Mucosa of descending colon (tissue), 3 donors: ENCODE measurements at regions of chr10 and their contacts with region 1.

Region 1: DNA sequence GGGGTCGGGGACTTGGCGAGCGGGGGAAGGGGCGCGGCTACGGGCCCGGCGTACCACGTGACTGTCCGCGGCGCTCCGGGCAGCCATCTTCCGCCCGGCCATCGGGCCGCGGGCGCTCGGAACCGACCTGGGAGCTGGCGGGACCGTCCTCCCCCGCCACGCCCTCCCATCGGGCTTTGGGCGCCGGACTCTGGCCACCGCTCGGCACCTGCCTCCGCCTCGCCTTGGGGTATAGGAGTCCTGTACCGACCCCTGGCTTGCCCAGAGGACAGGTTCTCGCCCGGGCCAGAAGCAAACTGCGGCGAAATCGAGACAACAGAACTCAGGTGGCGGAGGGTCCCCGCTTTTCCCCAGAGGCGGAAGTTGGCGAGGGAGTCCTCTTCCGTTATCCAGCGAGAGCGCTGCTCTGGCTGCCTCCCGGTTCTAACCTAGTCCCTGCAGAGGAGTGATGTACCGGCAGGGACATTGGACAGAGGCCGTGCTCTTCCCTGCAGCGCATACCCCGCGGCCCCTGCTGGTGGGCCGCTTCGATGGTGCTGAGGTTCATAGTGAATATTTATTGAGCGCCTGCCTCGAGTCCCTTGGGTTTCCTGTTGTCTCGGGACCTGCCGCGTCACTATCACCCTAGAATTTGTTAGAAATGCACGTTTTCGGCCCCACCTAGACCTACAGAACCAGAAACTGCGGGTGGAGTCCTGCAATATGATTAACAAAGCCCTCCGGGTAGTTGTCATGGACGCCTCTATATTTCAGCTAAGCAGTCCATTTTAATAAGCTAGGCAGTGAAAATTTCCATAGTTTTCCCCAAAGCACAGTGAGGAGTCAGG is 1.3 kb upstream of the SGMS1 start:
- DNase-seq: peak in 2 of 3 donors; percentile 82 to 90
- ATAC-seq: peak; percentile 69
- H3K4me3 ChIP-seq: peak overlapping the region; percentile 92
- H3K4me1 ChIP-seq: peaks cover 10% of the 10 kb centered on the region
- CTCF ChIP-seq: peak; percentile 27

Region 2: GRCh38 chr10:50375051-50375452 is 250.0 kb before region 1 on chr10:
- intact Hi-C with region 1: no loop called
- DNase-seq: no peak
- ATAC-seq: no peak
- H3K4me3 ChIP-seq: no peak overlapping the region
- H3K4me1 ChIP-seq: no peaks in the 10 kb centered on the region
- CTCF ChIP-seq: no peak

Region 3: DNA sequence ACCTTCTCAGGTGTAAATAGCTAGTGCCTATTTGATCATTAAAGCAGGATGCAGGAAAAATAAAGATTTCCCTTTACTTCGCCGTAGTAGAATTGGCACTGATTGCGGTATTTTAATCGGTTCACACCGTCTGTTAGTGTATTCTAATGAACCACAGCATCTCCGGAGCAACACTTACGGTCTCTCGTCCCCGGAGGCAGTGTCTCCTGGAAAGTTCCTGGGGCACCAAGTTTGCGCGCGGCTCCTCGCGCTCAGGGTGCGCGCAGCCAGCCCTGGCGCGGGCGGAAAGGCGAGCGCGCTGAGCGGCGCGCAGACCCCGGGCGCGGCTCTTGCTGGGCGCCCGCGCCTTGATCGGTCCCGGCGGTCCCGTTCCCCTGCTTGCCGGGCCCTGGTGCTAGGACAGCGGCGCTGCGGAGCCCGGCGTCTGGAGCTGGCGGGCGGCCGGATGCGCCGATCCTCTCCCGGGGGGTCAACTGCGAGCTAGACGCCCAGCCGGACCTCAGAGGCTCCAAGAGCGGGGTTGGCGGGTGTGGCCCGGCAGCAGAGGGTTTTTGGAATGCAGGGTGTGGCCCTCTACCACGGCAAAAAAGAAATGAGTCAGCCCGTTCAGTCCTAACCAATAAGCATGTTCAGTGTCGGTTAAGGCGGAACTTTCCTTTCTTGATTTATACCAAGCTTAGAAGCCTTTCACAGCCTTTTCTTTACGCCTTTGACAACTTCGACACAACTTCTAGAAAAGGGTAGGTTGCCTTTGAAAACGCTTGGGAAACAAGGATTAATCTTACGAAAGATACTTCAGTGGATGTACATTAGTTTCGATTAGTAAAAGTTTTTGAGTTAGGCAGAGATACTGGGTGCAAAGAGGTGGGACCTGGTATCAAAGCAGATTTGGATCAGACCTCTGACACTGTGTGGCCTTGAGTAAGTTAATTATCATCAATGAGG is 206.9 kb before region 1 on chr10:
- intact Hi-C with region 1: loop called in 1 of 2 experiments (anchors 5 kb)
- DNase-seq: peak; percentile 54 to 80 (median 70)
- ATAC-seq: peak; percentile 92
- H3K4me3 ChIP-seq: peak overlapping the region; percentile 40
- H3K4me1 ChIP-seq: no peaks in the 10 kb centered on the region
- CTCF ChIP-seq: no peak

Region 4: GRCh38 chr10:50470345-50470744 is 154.7 kb before region 1 on chr10:
- intact Hi-C with region 1: no loop called
- DNase-seq: no peak
- ATAC-seq: peak; percentile 59
- H3K4me3 ChIP-seq: no peak overlapping the region
- H3K4me1 ChIP-seq: peaks cover 20% of the 10 kb centered on the region
- CTCF ChIP-seq: no peak